PC-9 (cell line): ENCODE measurements at regions of chr6 and their contacts with region 1.

Region 1: GRCh38 chr6:30742316-30743098 is at the start of gene FLOT1:
- DNase-seq: peak; percentile 94 to 100
- H3K4me3 ChIP-seq: peak within 1 kb of the TSS; percentile 86
- H3K27ac ChIP-seq: peak within 1 kb of the TSS; percentile 93
- H3K4me1 ChIP-seq: peaks cover 59% of the 10 kb centered on the region
- H3K27me3 ChIP-seq: no peaks in the 10 kb centered on the region
- CTCF ChIP-seq: no peak
- total RNA-seq, gene FLOT1: 225 and 234 TPM in 2 replicates

Region 2: DNA sequence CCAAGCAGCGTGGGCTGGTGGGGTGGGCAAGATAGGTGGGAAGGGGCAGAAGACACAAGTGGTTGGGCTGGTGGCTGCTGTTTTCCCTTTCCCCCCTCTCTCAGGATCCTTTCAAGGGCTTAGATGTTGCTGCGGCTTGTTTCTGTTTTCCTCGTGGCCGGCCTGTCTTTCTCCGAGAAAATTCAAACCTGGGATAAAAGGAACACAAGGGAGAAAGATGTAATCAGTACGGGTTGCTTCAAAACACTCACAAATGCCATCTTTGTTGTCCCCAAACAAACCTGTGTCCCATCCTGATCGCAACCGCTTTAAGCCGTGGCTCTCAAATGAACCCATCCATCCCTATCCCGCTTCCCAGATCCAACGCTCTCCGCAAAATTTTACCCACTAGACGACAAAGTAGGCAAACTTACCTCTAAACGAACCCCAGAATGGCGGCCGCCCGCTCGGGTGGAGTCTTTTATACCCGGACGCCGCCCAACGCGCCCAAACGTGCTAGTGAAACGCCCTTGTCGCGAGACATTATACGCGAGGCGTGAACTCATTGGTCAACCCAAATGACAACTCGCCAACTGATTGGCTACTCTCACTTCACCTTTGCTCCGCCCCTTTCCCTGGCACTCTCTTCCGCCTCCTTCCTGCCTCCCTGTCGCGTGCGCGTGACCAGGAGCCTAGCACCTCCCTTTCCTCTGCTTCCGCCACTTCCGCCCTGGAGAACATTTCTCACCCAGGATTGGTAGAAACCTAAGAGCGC is 125.5 kb before region 1 on chr6 and contains the start of gene PPP1R10:
- CTCF ChIA-PET with region 1: no interaction called
- POLR2A ChIA-PET with region 1: no interaction called
- intact Hi-C with region 1: no loop called
- DNase-seq: peak; percentile 98 to 99
- H3K4me3 ChIP-seq: peak within 1 kb of the TSS; percentile 87
- H3K27ac ChIP-seq: peak within 1 kb of the TSS; percentile 86
- H3K4me1 ChIP-seq: peaks cover 35% of the 10 kb centered on the region
- H3K27me3 ChIP-seq: no peaks in the 10 kb centered on the region
- CTCF ChIP-seq: no peak
- total RNA-seq, gene PPP1R10: 47.6 and 69.5 TPM in 2 replicates

Region 3: DNA sequence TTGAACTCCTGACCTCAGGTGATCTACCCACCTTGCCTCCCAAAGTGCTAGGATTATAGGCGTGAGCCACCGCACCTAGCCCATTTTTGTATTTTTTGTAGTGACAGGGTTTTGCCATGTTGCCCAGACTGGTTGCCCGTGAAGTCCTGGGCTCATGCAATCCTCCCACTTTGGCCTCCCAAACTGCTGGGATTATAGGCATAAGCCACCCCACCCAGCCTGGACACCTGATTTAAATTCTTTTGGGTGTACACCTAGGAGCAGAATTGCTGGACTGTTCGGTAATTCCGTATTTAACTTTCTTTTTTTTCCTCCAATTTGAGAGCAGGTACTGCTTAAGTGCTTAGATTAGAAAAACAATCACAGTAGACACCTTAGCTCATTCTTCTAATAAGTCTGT is 46.1 kb before region 1 on chr6:
- CTCF ChIA-PET with region 1: no interaction called
- POLR2A ChIA-PET with region 1: interaction called, 21 read pairs
- intact Hi-C with region 1: no loop called
- DNase-seq: no peak
- H3K4me3 ChIP-seq: no peak overlapping the region
- H3K27ac ChIP-seq: no peak overlapping the region
- H3K4me1 ChIP-seq: peaks cover 18% of the 10 kb centered on the region
- H3K27me3 ChIP-seq: no peaks in the 10 kb centered on the region
- CTCF ChIP-seq: no peak

Region 4: DNA sequence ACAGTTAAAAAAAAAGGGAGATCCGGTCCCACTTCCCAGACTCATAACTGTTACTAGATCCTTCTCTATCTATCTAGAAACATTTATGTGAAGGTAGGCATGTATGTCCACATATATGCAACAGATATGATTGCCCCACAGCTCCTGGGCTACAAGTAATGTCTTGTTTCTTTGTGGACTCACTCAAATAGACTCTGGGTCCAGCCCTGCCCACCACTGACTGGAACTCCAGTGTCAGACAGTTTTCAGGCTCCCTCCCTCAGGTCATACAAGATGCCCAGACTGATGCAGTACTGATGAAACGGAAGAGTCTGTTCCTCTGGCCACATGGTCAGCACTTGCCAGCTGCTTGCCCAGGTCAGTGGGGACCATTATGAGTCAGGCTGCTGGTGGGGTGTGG is 32.6 kb after region 1 on chr6:
- CTCF ChIA-PET with region 1: no interaction called
- POLR2A ChIA-PET with region 1: interaction called, 25 read pairs
- intact Hi-C with region 1: no loop called
- DNase-seq: no peak
- H3K4me3 ChIP-seq: no peak overlapping the region
- H3K27ac ChIP-seq: no peak overlapping the region
- H3K4me1 ChIP-seq: peaks cover 37% of the 10 kb centered on the region
- H3K27me3 ChIP-seq: no peaks in the 10 kb centered on the region
- CTCF ChIP-seq: no peak

Region 5: DNA sequence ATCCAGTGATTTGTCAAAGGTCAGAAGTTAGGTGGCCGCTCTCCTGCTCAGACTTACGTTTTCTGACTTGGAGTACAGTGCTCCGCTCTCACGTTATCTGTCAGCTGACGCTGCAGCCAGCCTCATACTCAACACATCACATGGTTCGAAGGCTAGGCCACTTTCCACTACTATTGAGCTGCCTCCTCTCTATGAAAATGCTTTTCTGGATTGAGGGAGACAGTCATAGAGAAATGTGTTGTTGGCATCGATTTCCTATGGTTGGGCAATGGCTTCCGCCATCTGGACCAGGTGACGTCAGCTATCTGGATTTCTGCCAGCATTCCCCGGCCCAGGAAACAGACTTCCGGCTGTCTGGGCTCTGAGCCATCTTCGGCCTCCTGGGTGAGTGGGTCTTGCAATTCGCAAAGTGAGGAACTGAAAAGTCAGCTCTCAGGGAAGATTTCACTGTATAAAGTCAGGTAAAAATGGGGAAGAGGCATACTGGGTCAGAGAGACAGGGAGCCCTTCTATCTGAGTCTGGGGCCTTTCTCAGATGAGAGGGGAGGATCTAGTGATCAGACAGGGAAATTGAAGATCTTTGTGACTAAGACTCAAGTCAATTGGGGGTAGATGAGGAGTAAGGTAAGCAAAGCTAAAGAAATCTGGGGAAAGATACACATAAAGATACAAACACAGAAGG is 39.4 kb after region 1 on chr6:
- CTCF ChIA-PET with region 1: no interaction called
- POLR2A ChIA-PET with region 1: interaction called, 4 read pairs
- intact Hi-C with region 1: loop called (anchors 1 kb)
- DNase-seq: peak; percentile 91 to 97
- H3K4me3 ChIP-seq: peak overlapping the region; percentile 17; the same call in 1 of the 2 replicates
- H3K27ac ChIP-seq: peak overlapping the region; percentile 93
- H3K4me1 ChIP-seq: peaks cover 51% of the 10 kb centered on the region
- H3K27me3 ChIP-seq: no peaks in the 10 kb centered on the region
- CTCF ChIP-seq: no peak

Region 6: DNA sequence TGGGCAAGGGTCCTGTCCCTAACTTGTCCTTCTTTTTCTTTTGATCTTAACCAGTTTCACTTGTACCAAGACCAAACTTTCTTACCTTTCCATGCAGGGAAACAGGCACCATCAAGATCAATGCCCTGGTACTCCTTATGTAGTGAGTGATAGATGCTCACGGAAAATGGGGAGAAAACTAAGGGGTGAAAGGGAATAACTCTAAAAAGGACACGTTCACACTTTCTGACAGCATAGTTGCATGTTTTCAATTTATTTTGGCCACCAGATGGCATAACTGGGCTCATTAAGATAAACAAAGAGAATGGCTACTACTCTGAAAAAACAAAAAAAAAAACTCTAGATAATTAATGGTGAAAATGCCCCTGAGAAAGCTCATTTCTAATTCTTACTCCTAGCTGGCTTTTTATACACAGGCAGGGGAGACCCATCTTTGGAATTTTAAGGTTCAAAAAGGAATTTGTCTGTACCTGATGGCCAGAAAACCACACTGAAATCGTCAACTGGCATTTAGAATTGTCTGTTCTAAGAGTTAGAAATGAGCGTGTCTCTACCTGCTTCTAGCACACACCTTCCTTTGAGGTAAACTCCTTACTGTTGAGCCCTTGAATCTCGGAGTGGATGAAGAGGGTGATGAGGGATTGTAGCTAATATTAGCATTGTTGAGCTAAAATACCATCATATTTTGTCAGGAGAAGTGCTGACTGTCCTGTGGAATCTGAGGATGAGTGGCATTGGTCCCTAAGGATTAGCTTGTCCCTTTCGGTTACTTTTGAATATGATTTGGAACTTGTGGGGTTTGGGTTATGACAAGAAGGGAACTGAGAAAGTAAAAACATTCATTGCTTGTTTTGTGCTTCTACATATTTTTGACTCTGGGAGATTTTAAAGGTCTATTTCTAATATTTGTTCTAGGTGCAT is 79.6 kb after region 1 on chr6:
- CTCF ChIA-PET with region 1: interaction called, 5 read pairs
- POLR2A ChIA-PET with region 1: interaction called, 31 read pairs
- intact Hi-C with region 1: loop called (anchors 1 kb)
- DNase-seq: peak in 1 of 2 experiments; percentile 45
- H3K4me3 ChIP-seq: no peak overlapping the region
- H3K27ac ChIP-seq: peak overlapping the region; percentile 96
- H3K4me1 ChIP-seq: peaks cover 72% of the 10 kb centered on the region
- H3K27me3 ChIP-seq: no peaks in the 10 kb centered on the region
- CTCF ChIP-seq: peak; percentile 73

Region 7: DNA sequence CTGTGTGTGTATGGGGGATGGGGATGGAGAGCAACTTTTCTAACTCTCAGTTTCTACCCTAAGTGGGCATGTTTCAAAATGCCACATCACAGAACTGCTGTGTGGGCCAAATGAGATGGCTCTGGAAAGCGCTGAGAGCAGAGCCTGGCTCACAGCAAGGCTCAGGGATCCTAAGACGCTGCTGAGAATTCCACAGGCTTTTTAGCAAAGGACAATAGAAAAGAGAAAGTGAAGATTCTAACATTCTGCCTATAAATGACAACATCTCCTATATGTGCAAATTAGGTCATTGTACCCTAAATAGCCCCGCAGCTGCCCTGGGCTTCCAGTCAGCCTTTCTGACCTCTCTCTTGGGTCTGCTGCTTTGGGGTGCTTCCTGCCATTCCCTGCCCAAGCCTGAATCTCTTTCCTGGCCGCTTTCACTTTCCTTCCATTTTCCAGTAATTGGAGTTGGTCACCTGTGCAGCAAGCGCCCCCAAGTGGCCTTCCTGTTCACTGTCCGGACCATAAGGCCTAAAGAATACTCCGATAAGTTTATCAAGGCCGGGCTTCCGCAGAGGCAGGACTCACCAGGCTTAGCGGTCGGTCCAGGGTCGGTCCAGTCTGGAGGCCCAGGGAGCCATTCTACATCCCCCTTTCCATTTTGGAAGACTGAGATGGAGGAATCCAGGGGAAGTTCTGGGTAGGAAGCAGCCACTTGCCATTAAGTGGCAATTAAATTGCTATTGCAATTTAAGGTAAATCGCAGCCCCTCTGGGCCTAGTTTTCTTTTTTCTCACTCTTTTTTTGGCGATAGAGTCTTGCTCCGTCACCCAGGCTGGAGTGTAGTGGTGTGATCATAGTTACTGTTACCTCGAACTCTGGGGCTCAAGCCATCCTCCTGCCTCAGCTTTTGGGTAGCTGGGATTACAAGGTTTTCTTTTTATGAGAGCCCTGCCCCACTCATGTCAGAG is 135.2 kb after region 1 on chr6:
- CTCF ChIA-PET with region 1: no interaction called
- POLR2A ChIA-PET with region 1: interaction called, 3 read pairs
- intact Hi-C with region 1: loop called (anchors 1 kb)
- DNase-seq: peak; percentile 72 to 86
- H3K4me3 ChIP-seq: peak overlapping the region; percentile 49; the same call in 1 of the 2 replicates
- H3K27ac ChIP-seq: no peak overlapping the region
- H3K4me1 ChIP-seq: peaks cover 20% of the 10 kb centered on the region
- H3K27me3 ChIP-seq: no peaks in the 10 kb centered on the region
- CTCF ChIP-seq: peak; percentile 92

Region 8: GRCh38 chr6:31068669-31069340 is 326.3 kb after region 1 on chr6:
- CTCF ChIA-PET with region 1: no interaction called
- POLR2A ChIA-PET with region 1: no interaction called
- intact Hi-C with region 1: loop called (anchors 5 kb)
- DNase-seq: peak; percentile 61 to 80
- H3K4me3 ChIP-seq: no peak overlapping the region
- H3K27ac ChIP-seq: no peak overlapping the region
- H3K4me1 ChIP-seq: peaks cover 3% of the 10 kb centered on the region; the same call in 1 of the 2 replicates
- H3K27me3 ChIP-seq: no peaks in the 10 kb centered on the region
- CTCF ChIP-seq: peak; percentile 94